Activated naive CD4-positive, alpha-beta T cell treated with anti-CD3 and anti-CD28 coated beads for 36 hours (primary cell): ENCODE measurements at regions of chr1 and their contacts with region 1.

Region 1: DNA sequence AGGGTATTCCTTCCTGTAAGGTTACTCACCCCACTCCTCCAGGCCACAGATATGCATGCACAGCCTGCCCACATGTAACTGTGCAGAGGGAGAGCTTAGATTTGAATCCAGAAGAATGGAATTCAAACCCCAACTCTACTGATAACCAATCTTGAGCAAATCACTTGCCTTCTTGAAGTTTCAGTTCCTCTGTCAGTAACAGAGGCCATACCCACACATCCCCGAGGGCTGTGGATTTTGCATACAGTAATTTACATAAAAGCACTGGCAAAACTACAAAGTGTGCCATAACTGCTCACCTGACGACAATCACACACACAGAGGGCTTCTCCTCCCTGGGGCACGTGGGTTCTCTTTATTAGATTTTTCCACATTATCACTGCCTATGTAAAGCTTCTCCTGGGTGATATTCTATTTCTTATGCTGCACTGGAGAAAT is 18.6 kb downstream of the CD247 start:
- DNase-seq: peak; percentile 59
- H3K4me3 Mint-ChIP-seq: peak overlapping the region; percentile 10
- H3K27ac Mint-ChIP-seq: peak overlapping the region; percentile 87
- H3K4me1 Mint-ChIP-seq: peaks cover 97% of the 10 kb centered on the region
- H3K27me3 Mint-ChIP-seq: no peaks in the 10 kb centered on the region

Region 2: GRCh38 chr1:167342846-167343245 is 156.8 kb before region 1 on chr1:
- CTCF ChIA-PET with region 1: no interaction called
- intact Hi-C with region 1: no loop called
- DNase-seq: no peak
- H3K4me3 Mint-ChIP-seq: no peak overlapping the region
- H3K27ac Mint-ChIP-seq: no peak overlapping the region
- H3K4me1 Mint-ChIP-seq: peaks cover 3% of the 10 kb centered on the region
- H3K27me3 Mint-ChIP-seq: no peaks in the 10 kb centered on the region

Region 3: DNA sequence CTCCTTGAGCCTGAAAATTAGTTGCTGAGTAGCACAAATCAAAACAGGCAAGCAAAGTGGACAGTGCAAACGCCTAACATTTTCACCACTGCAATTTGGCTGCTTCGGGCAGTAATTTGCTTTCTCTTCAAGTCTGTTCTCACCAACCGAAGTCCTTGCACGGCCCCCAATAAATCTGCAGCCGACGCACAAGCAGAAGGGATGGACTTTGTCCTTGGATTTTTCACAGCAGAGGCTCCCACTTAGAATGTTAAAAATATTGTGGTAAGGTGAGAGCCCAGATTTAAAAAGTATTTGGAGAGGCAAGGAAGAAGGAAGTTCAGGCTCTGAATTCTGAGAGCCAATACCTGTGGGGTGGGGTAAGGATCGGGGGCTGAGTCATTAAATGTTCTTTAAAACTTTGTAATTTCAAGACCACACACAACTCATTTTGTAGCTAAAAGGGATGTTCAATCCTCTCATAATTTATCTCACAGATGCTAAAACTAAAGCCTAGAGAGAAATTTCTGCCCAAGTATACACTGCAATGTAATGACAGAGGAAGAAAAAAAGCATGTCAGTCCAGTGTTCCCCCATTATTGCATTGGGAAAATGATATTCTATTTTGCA is 12.5 kb after region 1 on chr1:
- CTCF ChIA-PET with region 1: interaction called, 14 read pairs
- intact Hi-C with region 1: loop called (anchors 1 kb)
- DNase-seq: peak; percentile 47
- H3K4me3 Mint-ChIP-seq: peak overlapping the region; percentile 74
- H3K27ac Mint-ChIP-seq: peak overlapping the region; percentile 85
- H3K4me1 Mint-ChIP-seq: peaks cover 65% of the 10 kb centered on the region
- H3K27me3 Mint-ChIP-seq: no peaks in the 10 kb centered on the region